Activated CD4-positive, alpha-beta T cell treated with anti-CD3 and anti-CD28 coated beads for 36 hours (primary cell): ENCODE measurements at regions of chr18 and their contacts with region 1.

Region 1: DNA sequence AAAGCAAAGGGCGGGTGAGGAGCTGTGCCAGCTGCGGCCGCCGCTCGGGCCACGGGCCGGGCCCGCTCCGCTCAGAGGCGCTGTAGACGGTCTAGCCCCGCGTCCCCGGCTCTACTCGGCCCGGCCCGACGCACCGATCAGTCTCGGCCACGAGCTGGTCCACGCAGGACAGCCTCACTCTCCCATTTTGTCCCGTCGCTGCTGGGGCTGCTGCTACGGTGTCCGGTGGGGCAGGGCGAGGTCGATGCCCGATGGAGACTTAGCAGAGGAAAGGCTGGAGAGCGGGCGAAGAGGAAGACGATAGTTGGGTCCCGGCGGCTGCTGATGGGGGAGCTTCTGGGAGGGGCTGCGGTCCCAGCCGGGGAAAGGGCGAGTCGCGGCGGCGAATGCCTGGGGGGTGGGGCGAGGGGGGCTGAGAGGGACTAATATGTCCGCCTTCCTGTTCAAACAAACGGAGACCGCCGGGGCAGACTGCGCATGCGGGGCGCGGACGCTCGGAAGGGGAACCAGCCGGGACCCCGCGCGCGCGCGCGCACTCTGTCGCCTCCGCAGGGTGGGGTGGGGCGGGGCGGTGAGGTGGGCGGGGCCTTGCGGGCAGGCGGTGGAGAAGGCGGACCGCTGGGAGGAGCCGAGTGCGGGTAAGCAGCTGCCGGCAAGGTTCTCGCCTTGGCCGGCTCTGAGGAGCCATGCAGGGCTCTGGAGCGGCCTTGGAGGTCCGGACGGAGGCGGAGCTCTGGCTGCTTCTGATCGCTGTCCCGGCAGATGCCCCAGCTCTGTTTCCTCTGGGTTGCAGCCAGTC is at the start of gene ROCK1:
- DNase-seq: peak; percentile 99
- ATAC-seq: peak; percentile 86
- H3K4me3 Mint-ChIP-seq: no peak within 1 kb of the TSS
- H3K27ac Mint-ChIP-seq: peak within 1 kb of the TSS; percentile 98
- H3K4me1 Mint-ChIP-seq: peaks cover 3% of the 10 kb centered on the region
- H3K27me3 Mint-ChIP-seq: no peaks in the 10 kb centered on the region
- total RNA-seq, gene ROCK1: 47.1 to 55.5 TPM

Region 2: DNA sequence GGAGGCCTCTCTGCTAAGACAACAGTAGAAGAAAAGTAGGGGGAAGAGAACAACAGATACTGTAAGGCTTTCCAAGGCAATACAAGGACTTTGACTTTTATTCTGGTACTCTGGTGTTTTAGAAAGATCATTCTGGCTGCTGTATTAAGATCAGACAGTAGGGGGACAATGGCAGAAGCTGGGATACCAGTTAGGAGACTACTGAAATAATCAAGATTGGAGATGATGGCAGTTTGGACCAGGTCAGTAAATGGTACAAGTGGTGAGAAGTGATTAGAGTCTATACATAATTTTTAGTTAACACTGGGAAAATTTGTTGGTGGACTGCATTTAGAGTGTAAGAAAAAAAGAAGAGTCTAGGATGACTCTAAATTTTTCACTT is 139.7 kb before region 1 on chr18:
- CTCF ChIA-PET with region 1: interaction called, 4 read pairs
- POLR2A ChIA-PET with region 1: no interaction called
- intact Hi-C with region 1: loop called in 1 of 2 experiments (anchors 5 kb)
- DNase-seq: no peak
- ATAC-seq: peak; percentile 64
- H3K4me3 Mint-ChIP-seq: no peak overlapping the region
- H3K27ac Mint-ChIP-seq: peak overlapping the region; percentile 22
- H3K4me1 Mint-ChIP-seq: no peaks in the 10 kb centered on the region
- H3K27me3 Mint-ChIP-seq: no peaks in the 10 kb centered on the region

Region 3: DNA sequence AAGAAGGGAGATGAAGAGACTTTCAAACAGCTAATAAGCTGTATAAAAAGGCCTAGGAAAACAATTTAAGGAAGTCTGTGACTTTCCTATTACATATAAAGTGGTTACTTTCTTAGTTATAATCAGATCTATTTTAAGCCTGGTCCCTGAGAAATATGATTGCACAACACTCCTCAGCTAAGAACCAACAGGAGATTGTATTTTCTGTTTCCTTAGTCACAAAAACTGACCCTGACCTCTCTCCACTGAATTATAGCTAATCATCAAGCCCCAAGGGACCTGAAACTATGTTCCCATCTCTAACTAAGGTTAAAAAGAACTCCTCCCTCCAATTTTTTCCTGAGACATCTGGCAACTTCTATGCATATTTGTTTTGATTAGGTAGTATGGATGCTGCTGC is 106.8 kb before region 1 on chr18:
- CTCF ChIA-PET with region 1: no interaction called
- POLR2A ChIA-PET with region 1: no interaction called
- intact Hi-C with region 1: loop called (anchors 5 to 10 kb)
- DNase-seq: no peak
- ATAC-seq: no peak
- H3K4me3 Mint-ChIP-seq: no peak overlapping the region
- H3K27ac Mint-ChIP-seq: no peak overlapping the region
- H3K4me1 Mint-ChIP-seq: peaks cover 9% of the 10 kb centered on the region
- H3K27me3 Mint-ChIP-seq: no peaks in the 10 kb centered on the region

Region 4: DNA sequence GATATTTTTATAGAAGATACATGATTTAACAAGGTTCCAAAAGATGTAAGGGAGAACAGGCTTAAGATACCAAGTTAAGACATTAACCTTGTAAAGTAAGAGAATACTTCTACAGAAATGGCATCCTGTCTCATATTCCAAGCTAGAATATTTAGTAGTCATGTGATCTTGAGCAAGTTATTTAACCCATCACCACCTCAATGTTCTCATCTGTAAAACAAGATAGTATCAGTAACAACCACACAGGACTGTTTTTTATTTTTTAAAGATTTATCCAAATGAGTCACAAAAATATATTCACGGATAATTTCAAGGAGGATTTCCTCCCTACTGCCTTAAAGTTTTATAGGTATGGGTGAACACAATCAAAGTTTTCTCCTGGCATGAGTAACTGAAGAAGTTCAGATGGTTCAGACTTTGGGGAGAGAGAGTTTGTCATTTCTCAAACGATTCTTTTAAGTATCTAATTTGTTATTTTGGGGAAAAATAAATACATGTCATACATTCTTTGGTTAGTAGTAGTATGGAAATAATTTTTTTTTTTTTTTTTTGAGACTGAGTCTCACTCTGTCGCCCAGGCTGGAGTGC is 25.9 kb before region 1 on chr18:
- CTCF ChIA-PET with region 1: no interaction called
- POLR2A ChIA-PET with region 1: interaction called, 3 read pairs
- intact Hi-C with region 1: loop called in 1 of 2 experiments (anchors 2 kb)
- DNase-seq: no peak
- ATAC-seq: no peak
- H3K4me3 Mint-ChIP-seq: no peak overlapping the region
- H3K27ac Mint-ChIP-seq: no peak overlapping the region
- H3K4me1 Mint-ChIP-seq: peaks cover 62% of the 10 kb centered on the region
- H3K27me3 Mint-ChIP-seq: no peaks in the 10 kb centered on the region

Region 5: GRCh38 chr18:21242141-21242779 is 130.7 kb after region 1 on chr18 and contains the start of gene GREB1L:
- CTCF ChIA-PET with region 1: no interaction called
- POLR2A ChIA-PET with region 1: no interaction called
- intact Hi-C with region 1: loop called in 1 of 2 experiments (anchors 10 kb)
- DNase-seq: peak; percentile 62
- ATAC-seq: peak; percentile 86
- H3K4me3 Mint-ChIP-seq: peak within 1 kb of the TSS; percentile 33
- H3K27ac Mint-ChIP-seq: no peak within 1 kb of the TSS
- H3K4me1 Mint-ChIP-seq: peaks cover 5% of the 10 kb centered on the region
- H3K27me3 Mint-ChIP-seq: peaks cover 52% of the 10 kb centered on the region
- total RNA-seq, gene GREB1L: not detected

Region 6: GRCh38 chr18:21439446-21439846 is 327.9 kb after region 1 on chr18:
- CTCF ChIA-PET with region 1: no interaction called
- POLR2A ChIA-PET with region 1: no interaction called
- intact Hi-C with region 1: no loop called
- DNase-seq: no peak
- ATAC-seq: no peak
- H3K4me3 Mint-ChIP-seq: no peak overlapping the region
- H3K27ac Mint-ChIP-seq: no peak overlapping the region
- H3K4me1 Mint-ChIP-seq: no peaks in the 10 kb centered on the region
- H3K27me3 Mint-ChIP-seq: peaks cover 23% of the 10 kb centered on the region

Region 7: GRCh38 chr18:21612125-21612991 is 500.8 kb after region 1 on chr18 and contains the start of gene SNRPD1:
- CTCF ChIA-PET with region 1: no interaction called
- POLR2A ChIA-PET with region 1: no interaction called
- intact Hi-C with region 1: loop called in 1 of 2 experiments (anchors 1 kb)
- DNase-seq: peak; percentile 93
- ATAC-seq: peak; percentile 98
- H3K4me3 Mint-ChIP-seq: peak within 1 kb of the TSS; percentile 92
- H3K27ac Mint-ChIP-seq: peak within 1 kb of the TSS; percentile 99
- H3K4me1 Mint-ChIP-seq: peaks cover 34% of the 10 kb centered on the region
- H3K27me3 Mint-ChIP-seq: no peaks in the 10 kb centered on the region
- total RNA-seq, gene SNRPD1: 79.9 to 163 TPM

Region 8: DNA sequence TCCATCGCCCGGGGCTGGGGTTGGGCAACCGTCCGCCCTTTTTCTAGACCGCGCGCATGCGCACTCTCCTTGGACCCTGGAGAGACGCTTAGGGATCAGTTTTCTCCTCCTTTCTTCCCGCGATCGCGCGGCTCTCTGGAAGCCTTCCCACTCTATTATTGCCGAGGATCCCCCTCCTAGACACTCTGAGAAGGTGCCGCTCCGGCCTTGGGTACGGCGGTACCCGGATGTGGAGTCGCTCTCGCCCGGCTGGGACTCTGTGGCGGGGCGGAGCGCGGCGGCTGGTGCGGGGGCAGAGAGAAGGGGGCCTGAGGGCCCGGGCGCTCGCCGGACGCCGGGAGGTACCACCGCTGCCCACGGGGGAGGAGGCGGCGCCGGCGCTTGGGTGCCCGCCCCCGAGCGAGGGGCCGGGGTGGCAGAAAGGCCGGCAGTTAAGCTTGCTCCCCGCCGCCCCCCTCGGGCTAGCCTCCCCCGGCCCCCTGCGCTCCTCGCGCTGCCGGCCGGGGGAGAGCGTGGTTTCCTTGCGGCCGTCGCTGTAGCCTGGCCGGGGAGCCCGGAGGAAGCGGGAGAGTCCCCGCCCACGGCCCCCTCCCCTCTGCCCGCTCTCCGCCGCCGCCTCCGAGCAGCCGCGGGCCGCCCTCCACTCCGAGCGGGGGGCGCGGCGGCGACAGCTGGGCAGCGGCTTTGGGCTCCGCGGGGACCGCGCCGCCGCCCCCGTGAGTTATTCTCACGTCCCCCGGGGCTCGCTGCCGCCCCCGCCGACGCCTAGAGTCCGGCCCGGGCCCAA is 629.4 kb after region 1 on chr18 and contains the start of gene MIB1:
- CTCF ChIA-PET with region 1: no interaction called
- POLR2A ChIA-PET with region 1: no interaction called
- intact Hi-C with region 1: loop called in 1 of 2 experiments (anchors 1 kb)
- DNase-seq: peak; percentile 62
- ATAC-seq: peak; percentile 73
- H3K4me3 Mint-ChIP-seq: peak within 1 kb of the TSS; percentile 93
- H3K27ac Mint-ChIP-seq: peak within 1 kb of the TSS; percentile 96
- H3K4me1 Mint-ChIP-seq: peaks cover 40% of the 10 kb centered on the region
- H3K27me3 Mint-ChIP-seq: no peaks in the 10 kb centered on the region
- total RNA-seq, gene MIB1: 24.7 to 33.6 TPM